ENCODE measurements at regions of chr1 and their contacts with region 1.

Region 1: DNA sequence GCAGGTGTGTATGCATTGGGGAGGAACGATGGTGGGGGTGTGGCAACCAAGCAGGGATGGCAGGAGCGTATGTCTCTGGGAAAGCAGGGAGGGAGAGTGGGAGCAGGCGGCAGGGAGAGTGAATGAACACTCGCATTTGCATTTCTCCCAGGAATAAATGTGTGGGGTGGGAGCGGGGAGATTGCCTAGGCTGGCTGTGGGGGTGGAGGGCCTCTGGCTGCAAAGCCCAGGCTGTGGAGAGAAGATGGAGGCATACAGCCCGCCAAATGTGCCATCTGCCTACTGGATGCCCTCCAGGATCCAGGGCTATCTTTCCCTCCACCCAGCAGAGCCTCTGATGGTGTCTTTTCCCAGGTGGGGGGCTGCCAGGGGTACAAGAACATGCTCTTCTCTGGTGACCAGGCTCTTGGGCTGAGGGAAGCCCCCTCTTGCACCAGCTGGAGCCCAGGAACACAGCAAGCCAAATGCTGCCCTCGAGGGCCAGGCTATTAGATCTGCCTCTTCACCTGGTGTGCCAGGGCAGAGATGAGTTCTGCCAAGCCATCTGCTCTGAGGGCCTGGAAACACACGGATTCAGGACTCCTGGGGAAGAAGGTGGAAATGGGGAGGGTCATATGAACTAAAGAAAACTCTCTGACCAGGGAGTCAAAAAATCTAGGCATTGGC is 1.7 kb upstream of the OPTC start:
- DNase-seq: no peak
- ATAC-seq: no peak
- H3K4me3 ChIP-seq: no peak overlapping the region
- H3K27ac ChIP-seq: no peak overlapping the region
- H3K4me1 ChIP-seq: no peaks in the 10 kb centered on the region
- H3K27me3 ChIP-seq: no peaks in the 10 kb centered on the region

Region 2: GRCh38 chr1:203361945-203362719 is 130.1 kb before region 1 on chr1:
- intact Hi-C with region 1: loop called in 3 of 4 experiments (anchors 5 kb)
- DNase-seq: no peak
- ATAC-seq: no peak
- H3K4me3 ChIP-seq: no peak overlapping the region
- H3K27ac ChIP-seq: no peak overlapping the region
- H3K4me1 ChIP-seq: peaks cover 6% of the 10 kb centered on the region
- H3K27me3 ChIP-seq: no peaks in the 10 kb centered on the region

Region 3: DNA sequence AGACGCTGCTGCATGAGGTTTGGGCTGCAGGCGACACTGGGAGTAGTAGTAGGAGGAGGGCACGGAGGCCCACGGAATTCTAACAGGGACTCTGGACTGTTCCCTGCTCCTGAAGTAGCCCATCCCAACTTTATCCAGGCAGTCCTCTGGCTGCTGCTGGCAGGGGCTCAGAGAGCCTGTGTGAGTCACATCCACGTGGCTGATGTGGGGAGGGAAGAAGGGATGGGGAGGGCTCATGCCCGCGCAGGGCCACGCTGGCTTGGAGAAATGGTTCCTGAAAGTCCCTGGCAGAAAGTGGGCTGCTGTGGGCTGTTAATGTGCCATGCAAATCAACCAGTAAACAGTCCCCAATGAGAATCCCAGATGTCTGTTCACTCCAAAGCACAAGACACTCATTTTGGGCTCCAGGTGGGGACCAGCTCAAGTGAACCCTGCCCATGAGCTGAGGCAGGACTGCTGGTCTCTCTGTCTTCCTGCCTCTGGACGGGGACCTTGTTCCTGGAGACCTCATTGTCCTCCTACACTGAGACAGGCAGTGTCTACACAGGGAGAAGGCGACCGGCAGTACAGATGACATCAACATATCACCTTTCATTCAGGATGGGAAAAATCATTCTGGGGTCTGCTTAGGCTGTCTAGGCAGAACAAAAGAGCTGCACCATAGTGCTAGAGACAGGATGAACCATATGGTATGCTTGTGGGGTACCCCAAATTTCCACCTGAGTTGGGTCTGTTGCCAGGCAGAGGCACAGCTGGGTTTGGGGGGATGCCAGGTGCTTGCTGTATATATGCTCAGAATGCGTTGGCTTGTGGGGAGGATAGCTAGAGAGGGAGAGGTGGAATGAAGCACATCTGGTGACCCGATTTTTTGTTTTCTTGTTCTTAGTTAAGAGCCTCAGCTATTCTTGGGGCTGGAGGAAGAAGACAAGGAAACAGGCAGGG is 83.5 kb before region 1 on chr1:
- intact Hi-C with region 1: no loop called
- DNase-seq: peak; percentile 88 to 94 (median 93)
- ATAC-seq: peak; percentile 94 to 95
- H3K4me3 ChIP-seq: no peak overlapping the region
- H3K27ac ChIP-seq: no peak overlapping the region
- H3K4me1 ChIP-seq: no peaks in the 10 kb centered on the region
- H3K27me3 ChIP-seq: no peaks in the 10 kb centered on the region

Region 4: DNA sequence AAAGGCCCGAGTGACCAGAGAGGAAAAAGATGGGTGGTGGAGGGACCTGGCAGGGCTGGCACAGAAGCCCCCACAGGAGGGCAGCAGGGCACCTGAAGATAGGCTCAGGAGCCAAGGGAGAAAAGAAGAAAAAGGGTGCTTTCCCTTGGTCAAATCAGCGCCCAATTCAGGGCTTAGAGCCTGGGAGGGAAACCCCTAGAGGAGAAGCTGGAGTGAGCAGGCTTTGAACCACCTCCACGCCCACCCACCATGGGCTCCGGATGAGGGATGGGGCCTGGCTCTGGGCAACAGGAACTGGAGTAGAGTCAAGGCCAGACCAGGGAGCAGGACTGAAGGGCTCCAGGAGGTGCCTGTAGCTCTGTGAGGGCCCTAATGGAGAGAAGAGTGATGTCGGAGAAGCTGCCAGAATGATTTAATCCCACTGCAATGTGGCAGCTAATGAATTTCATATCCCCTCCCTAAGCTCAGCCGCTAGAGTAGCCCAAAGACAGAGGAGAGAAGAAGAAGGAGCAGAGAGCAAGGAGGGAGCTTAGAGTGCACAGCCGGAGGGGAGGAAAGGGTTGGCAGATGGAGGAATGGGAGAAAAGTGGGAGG is 28.6 kb before region 1 on chr1:
- intact Hi-C with region 1: no loop called
- DNase-seq: peak in 2 of 3 donors; percentile 60 to 62
- ATAC-seq: peak; percentile 31 to 36
- H3K4me3 ChIP-seq: no peak overlapping the region
- H3K27ac ChIP-seq: peak overlapping the region; percentile 63
- H3K4me1 ChIP-seq: peaks cover 17% of the 10 kb centered on the region
- H3K27me3 ChIP-seq: no peaks in the 10 kb centered on the region

Region 5: GRCh38 chr1:203898458-203899244 is 406.4 kb after region 1 on chr1:
- intact Hi-C with region 1: no loop called
- DNase-seq: no peak
- ATAC-seq: no peak
- H3K4me3 ChIP-seq: no peak overlapping the region
- H3K27ac ChIP-seq: no peak overlapping the region
- H3K4me1 ChIP-seq: no peaks in the 10 kb centered on the region
- H3K27me3 ChIP-seq: no peaks in the 10 kb centered on the region

Region 6: GRCh38 chr1:204266504-204267034 is 774.4 kb after region 1 on chr1:
- intact Hi-C with region 1: no loop called
- DNase-seq: no peak
- ATAC-seq: peak; percentile 15 to 25
- H3K4me3 ChIP-seq: no peak overlapping the region
- H3K27ac ChIP-seq: no peak overlapping the region
- H3K4me1 ChIP-seq: peaks cover 23% of the 10 kb centered on the region
- H3K27me3 ChIP-seq: no peaks in the 10 kb centered on the region